HepG2 (cell line): ENCODE measurements at regions of chr2 and their contacts with region 1.

Region 1: DNA sequence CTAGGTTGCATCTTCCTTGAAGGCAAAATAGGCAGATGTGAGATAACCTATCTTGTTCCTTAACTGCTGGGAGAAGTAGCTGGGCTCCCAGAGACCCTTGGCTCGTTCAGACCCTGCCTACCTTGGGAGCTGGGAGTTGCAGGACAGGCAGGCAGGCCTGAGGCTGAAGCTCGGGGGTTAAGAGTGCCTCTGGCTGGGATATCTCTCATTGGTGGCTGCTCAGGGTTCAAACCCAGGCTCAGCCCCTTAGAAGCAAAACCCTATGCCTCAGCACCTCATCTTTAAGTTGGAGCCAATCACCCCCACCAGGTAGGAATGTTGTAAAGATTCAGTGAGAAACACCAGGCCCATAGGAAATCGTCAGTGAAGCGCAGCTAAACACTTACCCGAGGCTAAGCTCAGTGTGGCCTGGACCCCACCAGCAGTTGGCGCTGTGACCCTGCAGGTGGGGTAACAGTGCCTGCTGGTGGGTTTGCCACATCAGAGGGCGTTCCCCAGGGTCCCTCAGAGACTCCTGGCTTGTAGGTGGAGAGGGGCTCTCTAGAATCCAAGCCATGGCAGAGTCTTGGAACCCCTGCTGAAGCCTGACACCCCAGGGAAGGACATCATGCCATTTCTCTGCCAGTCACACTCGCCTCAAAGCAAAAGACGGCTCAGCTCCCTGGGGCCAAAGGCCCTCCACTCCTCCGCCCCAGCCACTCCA is 54.6 kb upstream of the GPR17 start:
- DNase-seq: peak; percentile 74
- ATAC-seq: peak; percentile 97
- H3K4me3 ChIP-seq: peak overlapping the region in 1 of 3 experiments; percentile 16; a peak in 1 of 6 replicates
- H3K27ac ChIP-seq: no peak overlapping the region
- H3K4me1 ChIP-seq: peaks cover 11% of the 10 kb centered on the region
- H3K27me3 ChIP-seq: peaks cover 2 to 20% of the 10 kb centered on the region in 2 experiments; a peak in 4 of 5 replicates
- CTCF ChIP-seq: peak; percentile 100
- EP300 ChIP-seq: no peak
- POLR2A ChIP-seq: no peak
- RAD21 ChIP-seq: peak; percentile 99

Region 2: GRCh38 chr2:127649684-127650040 is 58.3 kb after region 1 on chr2:
- CTCF ChIA-PET with region 1: interaction called, 41 read pairs
- POLR2A ChIA-PET with region 1: interaction called, 3 read pairs
- in situ Hi-C with region 1: no loop called
- intact Hi-C with region 1: loop called (anchors 1 kb)
- DNase-seq: peak; percentile 86
- ATAC-seq: peak; percentile 70
- H3K4me3 ChIP-seq: 0 out of 6 replicates have a peak overlapping the region, but pooled peaks of 1 of the 3 experiments have one; percentile 10
- H3K27ac ChIP-seq: no peak overlapping the region
- H3K4me1 ChIP-seq: peaks cover 62% of the 10 kb centered on the region
- H3K27me3 ChIP-seq: peaks cover 10 to 72% of the 10 kb centered on the region in 2 experiments
- CTCF ChIP-seq: peak; percentile 91
- EP300 ChIP-seq: no peak
- POLR2A ChIP-seq: no peak
- RAD21 ChIP-seq: peak; percentile 80

Region 3: DNA sequence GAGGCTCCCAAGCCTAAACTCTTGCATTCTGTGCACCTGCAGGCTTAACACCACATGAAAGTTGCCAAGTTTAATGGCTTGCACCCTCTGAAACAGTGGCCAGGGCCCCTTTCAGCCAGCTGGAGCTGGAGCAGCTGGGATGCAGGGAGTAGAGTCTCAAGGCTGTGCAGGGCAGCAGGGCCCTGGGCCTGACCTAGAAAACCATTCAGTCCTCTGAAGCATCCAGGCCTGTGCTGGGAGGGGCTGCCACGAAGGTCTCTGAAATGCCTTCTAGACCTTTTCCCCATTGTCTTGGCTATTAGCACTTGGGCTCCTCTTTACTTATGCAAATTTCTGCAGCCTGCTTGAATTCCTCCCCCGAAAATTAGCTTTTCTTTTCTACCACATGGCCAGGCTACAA is 99.3 kb after region 1 on chr2:
- CTCF ChIA-PET with region 1: no interaction called
- POLR2A ChIA-PET with region 1: no interaction called
- in situ Hi-C with region 1: no loop called
- intact Hi-C with region 1: no loop called
- DNase-seq: no peak
- ATAC-seq: no peak
- H3K4me3 ChIP-seq: no peak overlapping the region
- H3K27ac ChIP-seq: no peak overlapping the region
- H3K4me1 ChIP-seq: no peaks in the 10 kb centered on the region
- H3K27me3 ChIP-seq: peaks cover 0 to 5% of the 10 kb centered on the region in 2 experiments; a peak in 1 of 5 replicates
- CTCF ChIP-seq: no peak
- EP300 ChIP-seq: no peak
- POLR2A ChIP-seq: no peak
- RAD21 ChIP-seq: no peak

Region 4: DNA sequence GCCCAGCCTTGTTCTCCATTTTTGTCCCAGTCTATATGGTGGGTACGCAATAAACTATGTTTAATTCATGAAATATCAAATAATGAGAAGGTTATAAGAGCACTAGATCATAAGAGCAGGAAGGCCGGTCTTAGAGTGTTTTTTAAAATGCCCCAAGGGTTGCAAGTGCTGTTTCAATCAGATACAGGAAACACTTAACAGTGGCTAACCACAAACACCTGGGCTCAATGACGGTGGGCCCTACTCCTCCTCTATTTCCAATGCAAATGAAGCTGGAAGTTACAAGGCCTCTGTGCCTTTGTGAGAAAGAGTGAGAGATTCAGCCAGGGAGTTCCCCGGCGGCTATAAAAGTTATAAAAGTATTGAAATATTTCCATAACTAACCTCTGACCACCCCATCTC is 238.5 kb after region 1 on chr2:
- CTCF ChIA-PET with region 1: no interaction called
- POLR2A ChIA-PET with region 1: no interaction called
- in situ Hi-C with region 1: no loop called
- intact Hi-C with region 1: loop called (anchors 10 kb)
- DNase-seq: no peak
- ATAC-seq: no peak
- H3K4me3 ChIP-seq: no peak overlapping the region
- H3K27ac ChIP-seq: no peak overlapping the region
- H3K4me1 ChIP-seq: no peaks in the 10 kb centered on the region
- H3K27me3 ChIP-seq: 0 out of 5 replicates have a peak, but pooled peaks cover 0 to 4% of the 10 kb centered on the region in 2 experiments
- CTCF ChIP-seq: no peak
- EP300 ChIP-seq: no peak
- POLR2A ChIP-seq: no peak
- RAD21 ChIP-seq: no peak